OCI-LY7 (cell line): ENCODE measurements at regions of chr2 and their contacts with region 1.

Region 1: GRCh38 chr2:32051836-32052439 is 11.4 kb upstream of the SPAST start:
- DNase-seq: no peak
- H3K4me3 ChIP-seq: no peak overlapping the region
- H3K27ac ChIP-seq: no peak overlapping the region
- H3K4me1 ChIP-seq: no peaks in the 10 kb centered on the region
- CTCF ChIP-seq: no peak

Region 2: DNA sequence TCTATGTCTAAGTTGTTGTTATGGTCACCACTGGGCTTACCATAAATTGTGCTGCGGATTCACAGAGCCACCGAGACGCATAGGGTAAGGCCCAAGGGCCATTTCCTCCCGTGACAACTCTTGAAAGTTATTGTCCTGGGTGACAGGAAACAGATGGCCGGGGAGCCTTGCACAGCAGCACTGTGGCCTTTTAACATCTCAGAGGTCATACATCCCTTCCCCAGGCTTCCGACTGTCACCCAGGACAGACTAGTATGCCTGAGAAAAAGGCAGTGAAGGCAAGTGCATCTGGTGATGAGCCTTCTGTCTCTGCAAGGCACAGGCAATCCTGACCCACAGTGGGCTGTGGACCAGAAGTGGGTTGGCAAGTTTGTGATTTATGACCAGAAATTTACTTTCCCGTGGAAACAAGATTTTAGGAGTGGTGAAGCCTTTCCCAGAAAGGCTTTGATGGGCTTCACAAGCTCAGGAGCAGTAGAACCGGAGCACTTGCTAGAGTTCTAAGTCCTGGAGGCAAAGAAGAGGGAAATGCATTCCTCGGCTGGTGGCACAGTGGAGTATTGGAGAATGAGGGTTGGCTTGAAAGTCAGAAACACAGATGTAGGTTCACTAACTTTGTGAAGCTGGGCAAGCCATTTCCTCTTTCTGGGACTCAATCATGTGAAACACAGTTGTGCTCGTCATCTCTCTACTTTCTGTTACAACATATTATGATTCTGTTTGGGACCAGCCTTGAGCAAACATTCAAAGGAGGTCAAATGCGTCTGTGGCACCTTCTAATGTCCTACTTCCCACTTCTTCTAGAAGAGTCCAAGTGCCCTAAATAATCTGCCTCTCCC is 832.6 kb before region 1 on chr2:
- CTCF ChIA-PET with region 1: interaction called, 10 read pairs
- POLR2A ChIA-PET with region 1: no interaction called
- intact Hi-C with region 1: no loop called
- DNase-seq: peak; percentile 88
- H3K4me3 ChIP-seq: peak overlapping the region; percentile 46
- H3K27ac ChIP-seq: peak overlapping the region; percentile 79
- H3K4me1 ChIP-seq: peaks cover 71% of the 10 kb centered on the region
- CTCF ChIP-seq: no peak